Activated CD4-positive, alpha-beta T cell treated with anti-CD3 and anti-CD28 coated beads, Interleukin-2, amount 10 ng/mL, durations not matched to agents 24 days and 14 days (primary cell): ENCODE measurements at regions of chr13 and their contacts with region 1.

Region 1: DNA sequence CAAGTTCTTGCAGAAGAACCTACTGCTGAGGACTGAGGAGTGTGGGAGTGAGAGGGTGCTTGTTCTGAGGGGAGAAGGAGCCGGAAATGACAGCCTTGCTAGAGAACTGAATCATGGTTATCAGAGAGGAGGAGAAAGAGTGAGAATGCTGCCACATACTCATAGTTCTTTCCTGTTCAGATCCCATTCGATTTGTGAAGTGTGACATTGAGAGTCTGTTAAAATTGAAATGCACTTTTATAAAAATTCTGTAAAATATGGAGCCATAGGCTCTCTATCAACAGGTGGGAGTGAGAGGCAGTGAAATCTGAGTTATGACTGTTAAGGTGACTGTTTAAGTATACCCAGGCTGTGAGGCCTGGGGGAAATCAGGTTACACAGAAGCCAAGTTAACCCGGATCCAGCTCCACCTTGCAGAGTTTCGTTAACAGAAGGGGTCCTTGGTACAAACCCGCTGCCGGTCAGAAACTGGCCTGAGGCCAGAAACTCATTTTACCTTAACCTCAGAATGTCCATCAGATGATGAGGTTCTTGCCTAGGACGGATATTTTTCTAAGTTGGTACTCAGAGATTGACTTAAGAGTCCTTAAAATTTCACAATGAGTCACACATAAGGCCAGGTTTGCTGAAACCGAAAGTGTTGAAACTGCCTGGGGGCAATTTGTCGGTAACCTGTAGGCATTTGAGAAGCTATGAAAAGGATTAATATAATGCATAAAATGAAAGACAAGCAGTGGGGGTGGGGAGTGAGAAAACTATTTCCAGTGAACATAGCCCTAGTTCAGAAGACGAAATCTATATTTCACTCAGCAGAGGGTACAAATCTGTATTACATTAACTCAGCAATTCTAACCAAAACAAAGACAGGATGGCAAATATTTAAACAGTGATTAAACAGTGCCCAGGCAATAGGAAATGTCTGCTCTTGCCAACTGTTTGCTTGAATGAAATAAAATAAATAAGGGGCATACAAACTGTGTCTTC is 350.5 kb downstream of the KCNRG start:
- DNase-seq: peak; percentile 86
- H3K4me3 Mint-ChIP-seq: peak overlapping the region; percentile 68
- H3K27ac Mint-ChIP-seq: peak overlapping the region; percentile 84
- H3K4me1 Mint-ChIP-seq: peaks cover 43% of the 10 kb centered on the region
- H3K27me3 Mint-ChIP-seq: peaks cover 39% of the 10 kb centered on the region

Region 2: DNA sequence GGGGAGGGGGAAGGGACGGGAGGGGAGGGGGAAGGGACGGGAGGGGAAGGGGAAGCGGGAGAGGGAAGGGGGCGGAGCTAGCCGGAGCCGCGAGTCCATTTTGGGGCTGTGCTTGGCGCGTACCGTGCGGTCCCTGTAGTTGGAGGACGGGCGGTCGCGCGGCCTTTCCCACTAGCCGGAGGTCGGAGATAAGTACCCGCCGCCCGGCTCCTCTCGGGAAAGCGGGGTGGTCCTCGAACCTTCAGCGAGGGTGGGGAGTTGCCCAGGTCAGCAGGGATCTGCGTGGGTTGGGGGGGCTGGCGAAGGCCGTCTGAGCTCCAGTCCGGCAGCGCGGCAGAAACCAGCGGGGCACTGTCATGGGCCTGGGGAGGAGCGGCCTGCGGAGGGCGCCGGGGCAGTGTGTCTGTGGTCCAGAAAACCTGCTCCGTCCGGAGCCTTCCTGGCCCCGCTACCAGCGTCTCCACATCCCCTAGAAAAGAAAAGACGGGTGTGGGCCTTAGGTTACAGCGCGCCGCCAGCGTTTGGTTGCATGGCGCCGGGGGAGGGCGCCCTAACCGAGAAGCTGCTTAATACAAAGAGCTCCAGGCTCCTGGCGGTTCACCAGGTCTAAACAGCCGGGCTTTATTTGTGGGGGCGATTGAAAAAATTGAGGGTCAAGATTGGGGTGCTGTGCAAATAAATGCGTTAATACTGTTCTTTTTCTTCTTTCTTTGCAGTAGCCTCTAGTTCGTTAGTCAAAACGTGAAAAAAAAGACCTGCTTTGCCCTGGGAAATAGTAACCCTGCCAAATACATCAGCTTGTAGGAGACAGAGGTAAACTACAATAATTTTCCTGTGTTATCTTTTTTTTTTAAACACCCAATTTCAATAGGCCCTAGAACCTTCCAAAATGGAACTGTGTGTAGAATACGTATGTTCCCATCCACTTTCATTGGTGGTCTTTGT is 368.5 kb before region 1 on chr13 and contains the start of gene TRIM13:
- intact Hi-C with region 1: loop called (anchors 1 kb)
- DNase-seq: peak; percentile 95
- H3K4me3 Mint-ChIP-seq: peak within 1 kb of the TSS; percentile 88
- H3K27ac Mint-ChIP-seq: peak within 1 kb of the TSS; percentile 95
- H3K4me1 Mint-ChIP-seq: peaks cover 36% of the 10 kb centered on the region
- H3K27me3 Mint-ChIP-seq: no peaks in the 10 kb centered on the region
- total RNA-seq, gene TRIM13: 18.0 and 18.9 TPM in 2 replicates

Region 3: GRCh38 chr13:50167224-50167947 is 198.3 kb before region 1 on chr13:
- intact Hi-C with region 1: loop called (anchors 2 kb)
- DNase-seq: no peak
- H3K4me3 Mint-ChIP-seq: no peak overlapping the region
- H3K27ac Mint-ChIP-seq: no peak overlapping the region
- H3K4me1 Mint-ChIP-seq: peaks cover 8% of the 10 kb centered on the region
- H3K27me3 Mint-ChIP-seq: peaks cover 33% of the 10 kb centered on the region

Region 4: GRCh38 chr13:50244713-50245574 is 120.8 kb before region 1 on chr13:
- intact Hi-C with region 1: loop called (anchors 1 kb)
- DNase-seq: peak; percentile 78
- H3K4me3 Mint-ChIP-seq: peak overlapping the region; percentile 41
- H3K27ac Mint-ChIP-seq: peak overlapping the region; percentile 73
- H3K4me1 Mint-ChIP-seq: peaks cover 34% of the 10 kb centered on the region
- H3K27me3 Mint-ChIP-seq: peaks cover 33% of the 10 kb centered on the region

Region 5: DNA sequence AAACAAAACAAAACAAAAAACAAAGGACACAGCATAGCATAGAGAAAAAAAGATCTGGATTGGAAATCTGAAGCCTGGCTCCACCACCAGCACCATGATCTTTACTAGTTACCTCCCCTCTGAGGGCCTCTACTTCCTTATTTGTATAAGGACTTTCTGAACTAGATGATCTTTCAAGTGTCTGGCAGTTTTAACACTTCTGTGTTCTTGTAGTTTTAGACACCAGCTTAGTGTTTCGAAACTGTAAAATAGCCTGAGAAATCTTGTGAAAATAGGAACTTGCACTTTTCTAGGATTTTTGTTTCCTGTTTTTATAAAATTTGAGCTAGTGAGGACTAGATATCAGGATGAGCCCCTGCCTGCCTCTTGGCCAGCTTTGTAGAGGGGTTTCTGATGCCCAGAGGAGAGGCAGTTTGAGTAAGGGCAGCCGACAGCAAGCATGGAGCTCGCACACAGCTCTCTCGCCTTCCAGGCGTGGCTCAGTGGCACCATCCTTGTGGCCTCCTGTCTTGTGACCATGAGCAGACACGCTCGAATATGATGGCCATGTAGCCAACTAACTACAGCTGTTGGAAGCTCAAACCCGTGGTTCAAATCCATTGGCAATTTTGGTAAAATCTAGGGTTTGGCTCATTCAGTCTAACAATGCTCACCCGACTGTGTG is 31.5 kb before region 1 on chr13:
- intact Hi-C with region 1: no loop called
- DNase-seq: no peak
- H3K4me3 Mint-ChIP-seq: no peak overlapping the region
- H3K27ac Mint-ChIP-seq: no peak overlapping the region
- H3K4me1 Mint-ChIP-seq: peaks cover 3% of the 10 kb centered on the region
- H3K27me3 Mint-ChIP-seq: peaks cover 9% of the 10 kb centered on the region

Region 6: DNA sequence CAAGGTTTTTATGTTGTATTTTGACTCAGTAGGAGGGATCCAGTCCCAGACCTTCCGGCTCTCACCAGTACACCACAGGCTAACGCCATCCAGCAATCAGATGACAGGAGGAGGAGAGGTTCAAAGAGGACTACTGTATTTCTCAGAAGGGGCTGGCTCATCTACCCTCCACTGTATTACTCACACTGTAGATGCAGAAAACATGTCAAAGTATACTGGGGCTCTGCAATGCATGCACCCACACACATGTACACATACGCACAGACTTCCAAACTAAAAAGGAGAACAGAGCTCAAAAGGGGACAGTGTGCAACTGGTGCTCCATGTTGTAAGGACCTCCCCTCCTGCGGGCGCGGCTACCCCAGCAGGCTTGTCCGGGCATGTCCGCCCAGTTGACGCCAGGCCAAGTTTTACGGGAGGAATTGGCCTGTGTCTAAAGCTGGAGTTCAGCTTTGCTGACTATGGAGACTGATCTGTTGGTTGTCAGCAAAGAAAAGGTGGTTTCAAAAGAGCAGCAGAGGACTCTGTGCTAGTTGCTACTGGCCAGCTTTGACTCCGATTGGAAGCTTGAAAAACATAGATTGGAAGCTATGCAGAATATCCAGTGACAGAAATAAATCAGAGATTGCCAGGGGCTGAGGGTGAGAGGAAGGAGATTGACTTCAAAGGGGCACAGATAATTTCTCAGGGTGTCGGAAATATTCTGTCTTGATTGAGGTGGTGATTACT is 163.6 kb after region 1 on chr13:
- intact Hi-C with region 1: loop called (anchors 5 kb)
- DNase-seq: peak; percentile 70
- H3K4me3 Mint-ChIP-seq: peak overlapping the region; percentile 8
- H3K27ac Mint-ChIP-seq: peak overlapping the region; percentile 66
- H3K4me1 Mint-ChIP-seq: peaks cover 34% of the 10 kb centered on the region
- H3K27me3 Mint-ChIP-seq: peaks cover 21% of the 10 kb centered on the region